HEK293T (cell line): ENCODE measurements at regions of chr16 and their contacts with region 1.

Region 1: GRCh38 chr16:4734063-4734729 is at the starts of genes ANKS3 and DNAAF8:
- DNase-seq: peak; percentile 92

Region 2: DNA sequence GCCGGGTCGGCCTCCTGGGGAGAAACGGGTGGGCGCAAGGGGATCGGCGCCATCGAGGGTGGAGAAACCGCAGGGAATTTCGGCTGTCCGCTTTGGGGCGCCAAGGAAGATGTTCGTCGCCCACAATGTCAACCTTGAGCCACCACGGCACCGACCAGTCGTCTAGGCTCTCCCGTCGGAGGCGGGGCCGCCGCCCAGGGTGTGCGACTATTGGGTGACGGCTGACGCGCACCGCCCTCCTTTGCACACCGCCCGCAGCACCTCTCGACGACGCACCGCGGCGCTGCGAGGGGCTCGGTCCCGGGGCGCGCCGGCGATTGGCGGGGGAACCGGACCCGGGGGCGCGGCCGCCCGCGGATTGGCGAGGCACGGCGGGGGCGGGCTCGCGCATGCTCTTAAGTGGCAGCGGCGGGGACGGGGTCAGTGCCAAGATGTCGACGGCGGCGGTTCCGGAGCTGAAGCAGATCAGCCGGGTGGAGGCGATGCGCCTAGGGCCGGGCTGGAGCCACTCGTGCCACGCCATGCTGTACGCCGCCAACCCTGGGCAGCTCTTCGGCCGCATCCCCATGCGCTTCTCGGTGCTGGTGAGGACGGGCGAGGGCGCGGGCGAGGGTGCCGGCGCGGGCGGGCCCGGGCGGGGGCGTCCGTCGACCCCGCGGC is 40.8 kb before region 1 on chr16 and contains the start of gene NUDT16L1:
- CTCF ChIA-PET with region 1: no interaction called
- POLR2A ChIA-PET with region 1: interaction called, 12 read pairs
- DNase-seq: peak; percentile 98

Region 3: DNA sequence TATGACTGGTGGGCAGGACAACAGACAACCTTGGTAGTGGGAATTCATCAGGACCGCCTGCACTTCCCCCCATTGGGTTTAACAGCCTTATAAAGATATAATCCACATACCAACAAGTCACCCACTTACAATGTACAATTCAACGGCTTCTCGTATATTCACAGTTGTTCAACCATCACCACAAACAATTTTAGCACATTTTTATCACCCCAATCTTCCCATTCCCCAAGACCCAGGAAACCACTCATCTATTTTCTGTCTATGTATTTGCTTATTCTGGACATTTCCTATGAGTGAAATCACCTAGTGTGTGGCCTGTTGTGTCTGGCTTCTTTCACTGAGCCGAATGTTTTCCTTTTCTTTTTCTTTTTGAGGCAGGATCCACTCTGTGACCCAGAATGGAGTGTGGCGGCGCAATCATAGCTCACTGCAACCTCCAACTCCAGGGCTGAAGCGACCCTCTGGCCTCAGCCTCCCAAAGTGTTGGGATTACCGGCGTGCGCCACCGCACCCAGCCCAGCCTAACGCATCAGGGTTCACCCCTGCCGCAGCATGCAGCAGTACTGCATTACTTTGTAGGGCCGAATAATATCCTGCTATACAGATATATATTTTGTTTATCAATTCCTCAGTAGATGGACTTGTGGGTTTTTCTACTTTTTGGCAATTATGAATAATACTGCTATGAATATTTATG is 11.0 kb before region 1 on chr16:
- CTCF ChIA-PET with region 1: no interaction called
- POLR2A ChIA-PET with region 1: interaction called, 15 read pairs
- DNase-seq: no peak

Region 4: DNA sequence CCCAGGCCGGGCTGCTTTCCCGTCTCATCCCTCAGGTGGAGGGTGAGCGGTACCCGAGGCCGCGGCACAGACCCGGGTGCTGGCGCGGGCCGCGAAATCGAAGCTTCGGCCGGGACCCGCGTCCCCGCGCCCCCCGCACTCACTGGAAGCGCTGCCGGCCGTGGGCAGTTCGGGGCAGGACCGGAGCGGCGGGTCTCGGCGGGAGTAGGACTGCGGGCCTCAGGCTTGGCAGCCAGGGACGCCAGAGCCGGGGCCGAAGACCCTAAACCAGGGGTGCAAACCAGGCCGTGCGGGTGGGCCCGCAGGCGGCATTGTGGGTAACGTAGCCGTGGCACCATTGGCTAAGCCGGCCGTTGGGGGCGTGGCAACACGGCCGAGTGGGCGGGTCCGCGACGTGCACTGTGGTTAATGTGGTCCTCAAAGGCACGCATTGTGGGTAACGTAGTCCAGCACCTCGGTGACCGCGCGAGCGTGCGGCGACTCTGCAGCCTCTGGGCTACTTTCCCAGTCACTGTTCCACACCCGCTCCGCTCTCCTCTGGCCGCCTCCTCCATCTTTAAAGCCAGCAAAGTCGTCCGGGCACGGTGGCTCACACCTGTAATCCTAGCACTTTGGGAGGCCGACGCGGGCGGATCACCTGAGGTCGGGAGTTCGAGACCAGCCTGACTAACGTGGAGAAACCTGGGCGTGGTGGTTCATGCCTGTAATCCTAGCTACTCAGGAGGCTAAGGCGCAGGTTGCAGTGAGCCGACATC is 32.9 kb after region 1 on chr16 and contains the start of gene ZNF500:
- CTCF ChIA-PET with region 1: interaction called, 3 read pairs
- POLR2A ChIA-PET with region 1: interaction called, 19 read pairs
- DNase-seq: peak; percentile 96

Region 5: GRCh38 chr16:4802659-4803287 is 68.6 kb after region 1 on chr16:
- CTCF ChIA-PET with region 1: no interaction called
- POLR2A ChIA-PET with region 1: interaction called, 18 read pairs
- DNase-seq: peak; percentile 97

Region 6: DNA sequence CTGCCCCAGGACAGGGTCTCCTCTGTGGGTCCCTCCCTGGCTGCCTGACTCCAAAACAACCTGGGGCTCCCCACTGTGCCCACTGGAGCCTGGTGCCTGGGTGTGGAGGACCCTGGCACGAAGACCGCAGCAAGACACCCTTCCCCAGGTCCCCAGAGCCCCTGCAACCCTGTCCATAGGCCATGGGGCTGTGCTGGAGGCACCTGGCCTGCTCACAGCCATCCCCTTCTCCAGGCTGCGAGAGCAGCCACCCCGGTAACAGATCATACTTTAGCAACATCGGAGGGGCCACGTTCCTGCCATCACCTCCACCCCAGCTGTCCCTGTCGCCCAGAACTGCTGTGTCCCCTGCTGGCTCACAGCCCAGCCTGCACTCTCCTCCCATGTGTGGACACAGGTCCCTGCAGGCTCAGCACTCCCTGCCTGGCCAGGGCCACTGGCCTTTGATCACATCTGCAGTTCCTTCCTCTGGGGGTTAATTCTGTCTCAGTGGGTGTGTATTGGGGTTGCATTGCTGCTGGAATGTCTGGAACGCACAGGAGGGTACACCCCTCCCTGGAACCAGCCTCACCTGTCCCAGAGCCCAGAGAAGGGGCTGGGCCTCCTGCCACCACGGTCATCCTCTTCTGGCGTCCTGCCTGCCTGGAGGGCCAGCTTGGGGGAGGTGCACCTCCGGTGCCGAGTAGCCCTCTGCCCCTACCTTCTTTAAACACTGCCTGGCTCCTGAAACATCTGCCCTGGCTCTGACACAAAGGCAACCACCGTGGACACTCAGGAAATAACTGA is 190.6 kb after region 1 on chr16:
- CTCF ChIA-PET with region 1: no interaction called
- POLR2A ChIA-PET with region 1: no interaction called
- DNase-seq: no peak